Calu3 (cell line): ENCODE measurements at regions of chr5 and their contacts with region 1.

Region 1: DNA sequence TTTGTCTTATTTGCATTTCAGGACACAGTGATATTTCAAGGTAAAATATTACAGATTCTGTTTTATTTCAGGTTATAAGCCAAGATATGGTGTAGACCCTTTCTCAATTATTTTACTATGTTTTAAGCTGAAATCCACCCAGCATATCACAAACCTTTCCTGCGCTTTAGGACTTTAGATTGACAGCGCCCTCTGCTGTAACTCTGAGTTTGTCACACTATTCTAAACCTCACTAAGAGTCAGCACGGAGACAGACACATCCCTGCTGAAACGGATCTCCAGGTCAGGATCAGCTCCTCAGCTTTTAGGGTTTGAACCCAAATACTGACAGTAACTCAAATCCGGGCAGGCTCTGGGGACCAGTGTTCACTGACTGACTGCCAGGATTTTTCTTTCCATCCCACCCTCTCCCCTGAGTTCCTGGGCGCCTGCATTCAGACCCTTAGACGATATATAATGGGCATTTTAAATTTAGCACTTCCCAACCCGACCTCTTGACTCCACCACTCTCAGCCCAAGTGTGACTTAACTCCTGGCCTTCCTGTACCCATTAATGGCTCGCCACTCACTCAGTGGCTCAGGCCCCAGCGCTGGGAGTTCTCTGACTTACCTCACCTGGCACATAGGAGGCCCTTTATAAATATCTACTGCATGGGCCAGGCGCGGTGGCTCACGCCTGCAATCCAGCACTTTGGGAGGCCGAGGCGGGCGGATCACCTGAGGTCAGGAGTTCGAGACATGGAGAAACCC is 33.5 kb downstream of the TLX3 start:
- DNase-seq: peak; percentile 66
- H3K4me3 Mint-ChIP-seq: no peak overlapping the region
- H3K27ac Mint-ChIP-seq: no peak overlapping the region
- H3K4me1 Mint-ChIP-seq: no peaks in the 10 kb centered on the region
- H3K27me3 Mint-ChIP-seq: no peaks in the 10 kb centered on the region
- CTCF ChIP-seq: peak; percentile 60

Region 2: DNA sequence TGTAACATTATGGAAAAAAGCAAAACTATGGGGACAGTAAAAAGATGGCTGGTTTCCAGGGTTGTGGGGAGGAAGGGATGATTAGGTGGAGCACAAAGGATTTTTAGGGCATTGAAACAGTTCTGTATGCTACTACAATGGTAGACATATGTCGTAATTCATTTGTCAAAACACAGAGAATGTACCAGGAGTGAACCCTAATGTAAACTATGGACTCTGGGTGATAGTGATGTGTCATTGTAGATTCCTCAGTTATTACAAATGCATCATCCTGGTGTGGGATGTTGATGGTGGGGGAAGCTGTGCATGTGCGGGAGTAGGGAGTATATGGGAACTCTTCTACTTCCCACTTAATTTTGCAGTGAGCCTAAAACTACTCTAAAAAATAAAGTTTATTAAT is 694.0 kb before region 1 on chr5:
- CTCF ChIA-PET with region 1: no interaction called
- intact Hi-C with region 1: no loop called
- DNase-seq: no peak
- H3K4me3 Mint-ChIP-seq: no peak overlapping the region
- H3K27ac Mint-ChIP-seq: no peak overlapping the region
- H3K4me1 Mint-ChIP-seq: peaks cover 8% of the 10 kb centered on the region
- H3K27me3 Mint-ChIP-seq: peaks cover 96% of the 10 kb centered on the region
- CTCF ChIP-seq: no peak

Region 3: GRCh38 chr5:171207256-171207847 is 135.2 kb before region 1 on chr5:
- CTCF ChIA-PET with region 1: interaction called, 18 read pairs
- intact Hi-C with region 1: loop called (anchors 1 kb)
- DNase-seq: peak; percentile 47
- H3K4me3 Mint-ChIP-seq: no peak overlapping the region
- H3K27ac Mint-ChIP-seq: no peak overlapping the region
- H3K4me1 Mint-ChIP-seq: no peaks in the 10 kb centered on the region
- H3K27me3 Mint-ChIP-seq: no peaks in the 10 kb centered on the region
- CTCF ChIP-seq: peak; percentile 61

Region 4: GRCh38 chr5:171858303-171858702 is 515.8 kb after region 1 on chr5:
- CTCF ChIA-PET with region 1: interaction called, 10 read pairs
- intact Hi-C with region 1: no loop called
- DNase-seq: no peak
- H3K4me3 Mint-ChIP-seq: no peak overlapping the region
- H3K27ac Mint-ChIP-seq: no peak overlapping the region
- H3K4me1 Mint-ChIP-seq: no peaks in the 10 kb centered on the region
- H3K27me3 Mint-ChIP-seq: no peaks in the 10 kb centered on the region
- CTCF ChIP-seq: peak; percentile 25